ENCODE measurements at regions of chr16 and their contacts with region 1.

Region 1: GRCh38 chr16:55756963-55757362 is 75.9 kb downstream of the CES1 start:
- DNase-seq: peak; percentile 57 to 83 (median 64)
- H3K4me3 ChIP-seq: peak overlapping the region in 1 of 3 experiments; percentile 32
- H3K4me3 Mint-ChIP-seq: no peak overlapping the region
- H3K27ac ChIP-seq: peak overlapping the region; percentile 56 to 71
- H3K27ac Mint-ChIP-seq: peak overlapping the region; percentile 63 to 94 (median 82)
- H3K4me1 ChIP-seq: peaks cover 39 to 59% of the 10 kb centered on the region in 2 donors
- H3K4me1 Mint-ChIP-seq: peaks cover 49% of the 10 kb centered on the region
- H3K27me3 ChIP-seq: peaks cover 0 to 3% of the 10 kb centered on the region in 2 donors
- H3K27me3 Mint-ChIP-seq: peaks cover 0 to 19% (median 7%) of the 10 kb centered on the region in 3 donors
- CTCF ChIP-seq: no peak

Region 2: GRCh38 chr16:55437625-55438024 is 319.3 kb before region 1 on chr16:
- intact Hi-C with region 1: loop called in 1 of 2 experiments (anchors 5 kb)
- DNase-seq: peak; percentile 91 to 99 (median 97)
- H3K4me3 ChIP-seq: peak overlapping the region in 1 of 3 experiments; percentile 12
- H3K4me3 Mint-ChIP-seq: peak overlapping the region in 1 of 2 donors; percentile 64
- H3K27ac ChIP-seq: peak overlapping the region; percentile 70 to 92
- H3K27ac Mint-ChIP-seq: peak overlapping the region; percentile 91 to 98 (median 98)
- H3K4me1 ChIP-seq: peaks cover 49 to 50% of the 10 kb centered on the region in 2 donors
- H3K4me1 Mint-ChIP-seq: peaks cover 47% of the 10 kb centered on the region
- H3K27me3 ChIP-seq: no peaks in the 10 kb centered on the region
- H3K27me3 Mint-ChIP-seq: peaks cover 0 to 8% (median 5%) of the 10 kb centered on the region in 3 donors
- CTCF ChIP-seq: no peak

Region 3: GRCh38 chr16:55655860-55656695 is 100.9 kb before region 1 on chr16 and contains the start of gene SLC6A2:
- intact Hi-C with region 1: no loop called
- DNase-seq: no peak
- H3K4me3 ChIP-seq: no peak within 1 kb of the TSS
- H3K4me3 Mint-ChIP-seq: peak within 1 kb of the TSS in 1 of 2 donors; percentile 75
- H3K27ac ChIP-seq: no peak within 1 kb of the TSS
- H3K27ac Mint-ChIP-seq: no peak within 1 kb of the TSS
- H3K4me1 ChIP-seq: peaks cover 0 to 8% of the 10 kb centered on the region in 2 donors
- H3K4me1 Mint-ChIP-seq: peaks cover 4% of the 10 kb centered on the region
- H3K27me3 ChIP-seq: peaks cover 21 to 59% of the 10 kb centered on the region in 2 donors
- H3K27me3 Mint-ChIP-seq: peaks cover 27 to 34% (median 32%) of the 10 kb centered on the region in 3 donors
- CTCF ChIP-seq: no peak
- polyA plus RNA-seq, gene SLC6A2: not detected

Region 4: GRCh38 chr16:55711959-55712876 is 44.7 kb before region 1 on chr16:
- intact Hi-C with region 1: loop called in 1 of 2 experiments (anchors 5 kb)
- DNase-seq: peak; percentile 54 to 71 (median 61)
- H3K4me3 ChIP-seq: no peak overlapping the region
- H3K4me3 Mint-ChIP-seq: no peak overlapping the region
- H3K27ac ChIP-seq: no peak overlapping the region
- H3K27ac Mint-ChIP-seq: no peak overlapping the region
- H3K4me1 ChIP-seq: no peaks in the 10 kb centered on the region
- H3K4me1 Mint-ChIP-seq: no peaks in the 10 kb centered on the region
- H3K27me3 ChIP-seq: peaks cover 2 to 3% of the 10 kb centered on the region in 2 donors
- H3K27me3 Mint-ChIP-seq: peaks cover 5 to 12% (median 8%) of the 10 kb centered on the region in 3 donors
- CTCF ChIP-seq: peak; percentile 85

Region 5: DNA sequence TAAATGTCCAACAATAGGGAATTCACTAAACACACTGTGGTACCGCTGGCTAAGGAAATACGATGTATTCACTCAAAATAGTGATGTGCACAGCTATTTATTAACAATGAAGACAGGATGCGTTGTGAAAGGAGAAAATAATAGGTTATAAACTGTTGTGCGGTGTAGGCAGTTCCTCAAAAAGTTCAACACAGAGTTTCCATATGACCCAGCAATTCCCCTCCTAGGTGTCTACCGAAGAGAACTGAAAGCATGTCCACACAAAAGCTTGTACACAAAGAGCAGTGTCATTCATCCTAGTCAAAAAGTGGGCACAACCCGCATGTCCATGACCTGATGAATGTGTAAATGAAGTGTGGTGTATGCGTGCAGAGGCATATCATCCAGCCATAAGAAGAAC is 77.1 kb after region 1 on chr16:
- intact Hi-C with region 1: loop called in 1 of 2 experiments (anchors 2 kb)
- DNase-seq: peak; percentile 55 to 63 (median 59)
- H3K4me3 ChIP-seq: peak overlapping the region in 1 of 3 experiments; percentile 75
- H3K4me3 Mint-ChIP-seq: peak overlapping the region in 1 of 2 donors; percentile 65
- H3K27ac ChIP-seq: peak overlapping the region in 1 of 2 donors; percentile 81
- H3K27ac Mint-ChIP-seq: peak overlapping the region; percentile 68 to 94 (median 92)
- H3K4me1 ChIP-seq: peaks cover 53 to 74% of the 10 kb centered on the region in 2 donors
- H3K4me1 Mint-ChIP-seq: peaks cover 87% of the 10 kb centered on the region
- H3K27me3 ChIP-seq: no peaks in the 10 kb centered on the region
- H3K27me3 Mint-ChIP-seq: peaks cover 0 to 6% (median 4%) of the 10 kb centered on the region in 3 donors
- CTCF ChIP-seq: no peak

Region 6: GRCh38 chr16:55876854-55877253 is 119.9 kb after region 1 on chr16:
- intact Hi-C with region 1: no loop called
- DNase-seq: no peak
- H3K4me3 ChIP-seq: no peak overlapping the region
- H3K4me3 Mint-ChIP-seq: no peak overlapping the region
- H3K27ac ChIP-seq: no peak overlapping the region
- H3K27ac Mint-ChIP-seq: no peak overlapping the region
- H3K4me1 ChIP-seq: no peaks in the 10 kb centered on the region
- H3K4me1 Mint-ChIP-seq: no peaks in the 10 kb centered on the region
- H3K27me3 ChIP-seq: no peaks in the 10 kb centered on the region
- H3K27me3 Mint-ChIP-seq: peaks cover 4 to 12% (median 6%) of the 10 kb centered on the region in 3 donors
- CTCF ChIP-seq: no peak